IMR-90 (cell line): ENCODE measurements at regions of chr5 and their contacts with region 1.

Region 1: DNA sequence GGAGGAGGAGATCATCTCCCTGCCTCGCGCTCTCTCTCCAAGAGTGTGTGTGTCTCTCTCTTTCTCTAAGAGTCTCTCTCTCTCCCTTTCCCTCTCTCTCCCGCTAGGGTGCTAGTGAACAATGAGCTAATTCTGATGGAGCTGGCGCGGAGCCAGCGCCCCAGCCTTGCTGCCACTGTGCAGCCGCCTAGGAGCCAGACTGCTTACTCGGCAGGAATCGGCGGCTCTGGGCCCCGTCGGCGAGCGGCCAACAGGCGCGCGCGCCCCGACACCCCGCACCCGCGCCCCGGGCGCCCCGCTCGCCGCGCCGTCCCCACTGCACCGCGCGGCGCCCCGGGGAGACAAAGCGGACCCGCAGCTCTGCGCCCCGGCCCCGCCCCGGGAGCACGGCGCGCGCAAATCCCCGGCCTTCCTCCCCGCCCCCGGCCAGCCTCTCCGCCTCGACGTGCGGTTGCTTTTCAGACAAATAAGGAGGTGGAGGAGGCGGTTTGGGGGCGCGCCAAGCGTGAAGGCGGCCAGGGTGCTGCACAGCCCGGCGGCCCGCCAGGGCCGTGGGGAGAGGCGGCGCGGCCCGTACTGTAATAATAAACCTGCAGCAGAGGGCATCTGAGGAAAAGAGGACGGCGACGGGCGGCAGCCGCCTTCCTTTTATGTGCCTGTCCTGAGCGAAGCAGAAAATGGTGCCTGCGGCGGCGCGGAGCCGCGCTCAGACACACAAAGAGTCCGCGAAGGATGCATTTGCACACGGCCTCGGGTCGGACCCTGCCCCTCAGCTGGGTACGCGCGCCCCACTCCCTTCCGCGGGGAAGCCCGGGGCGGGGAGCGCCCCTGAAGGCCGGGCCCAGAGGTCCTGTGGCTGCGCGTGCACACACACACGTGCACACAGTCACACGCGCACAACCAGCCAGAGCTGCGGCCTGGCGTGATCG is 625 bp upstream of the NREP start:
- DNase-seq: peak; percentile 97
- ATAC-seq: peak; percentile 90
- H3K4me3 ChIP-seq: peak overlapping the region; percentile 95
- H3K27ac ChIP-seq: peak overlapping the region; percentile 93
- H3K4me1 ChIP-seq: peaks cover 4% of the 10 kb centered on the region
- H3K27me3 ChIP-seq: no peaks in the 10 kb centered on the region
- CTCF ChIP-seq: peak; percentile 59
- POLR2A ChIP-seq: peak; percentile 77
- RAD21 ChIP-seq: peak; percentile 57

Region 2: GRCh38 chr5:111158105-111158744 is 599.4 kb before region 1 on chr5:
- CTCF ChIA-PET with region 1: no interaction called
- POLR2A ChIA-PET with region 1: no interaction called
- dilution Hi-C with region 1: no loop called
- in situ Hi-C with region 1: no loop called
- intact Hi-C with region 1: loop called (anchors 1 kb)
- DNase-seq: peak; percentile 85
- ATAC-seq: peak; percentile 95
- H3K4me3 ChIP-seq: no peak overlapping the region
- H3K27ac ChIP-seq: no peak overlapping the region
- H3K4me1 ChIP-seq: no peaks in the 10 kb centered on the region
- H3K27me3 ChIP-seq: no peaks in the 10 kb centered on the region
- CTCF ChIP-seq: peak; percentile 99
- POLR2A ChIP-seq: 0 out of 2 replicates have a peak, but pooled peaks have one; percentile 28
- RAD21 ChIP-seq: peak; percentile 97

Region 3: GRCh38 chr5:111582993-111583601 is 174.5 kb before region 1 on chr5:
- CTCF ChIA-PET with region 1: no interaction called
- POLR2A ChIA-PET with region 1: no interaction called
- dilution Hi-C with region 1: no loop called
- in situ Hi-C with region 1: no loop called
- intact Hi-C with region 1: loop called (anchors 1 kb)
- DNase-seq: peak; percentile 89
- ATAC-seq: peak; percentile 91
- H3K4me3 ChIP-seq: no peak overlapping the region; the same call in 1 of the 2 replicates
- H3K27ac ChIP-seq: no peak overlapping the region
- H3K4me1 ChIP-seq: peaks cover 11% of the 10 kb centered on the region; the same call in 1 of the 2 replicates
- H3K27me3 ChIP-seq: no peaks in the 10 kb centered on the region
- CTCF ChIP-seq: no peak
- POLR2A ChIP-seq: no peak
- RAD21 ChIP-seq: no peak

Region 4: GRCh38 chr5:111954516-111955395 is 197.1 kb after region 1 on chr5:
- CTCF ChIA-PET with region 1: no interaction called
- POLR2A ChIA-PET with region 1: no interaction called
- dilution Hi-C with region 1: no loop called
- in situ Hi-C with region 1: no loop called
- intact Hi-C with region 1: loop called (anchors 2 kb)
- DNase-seq: peak; percentile 51
- ATAC-seq: peak; percentile 60
- H3K4me3 ChIP-seq: no peak overlapping the region
- H3K27ac ChIP-seq: peak overlapping the region; percentile 45; the same call in 1 of the 2 replicates
- H3K4me1 ChIP-seq: peaks cover 8% of the 10 kb centered on the region
- H3K27me3 ChIP-seq: no peaks in the 10 kb centered on the region
- CTCF ChIP-seq: no peak
- POLR2A ChIP-seq: no peak
- RAD21 ChIP-seq: no peak

Region 5: DNA sequence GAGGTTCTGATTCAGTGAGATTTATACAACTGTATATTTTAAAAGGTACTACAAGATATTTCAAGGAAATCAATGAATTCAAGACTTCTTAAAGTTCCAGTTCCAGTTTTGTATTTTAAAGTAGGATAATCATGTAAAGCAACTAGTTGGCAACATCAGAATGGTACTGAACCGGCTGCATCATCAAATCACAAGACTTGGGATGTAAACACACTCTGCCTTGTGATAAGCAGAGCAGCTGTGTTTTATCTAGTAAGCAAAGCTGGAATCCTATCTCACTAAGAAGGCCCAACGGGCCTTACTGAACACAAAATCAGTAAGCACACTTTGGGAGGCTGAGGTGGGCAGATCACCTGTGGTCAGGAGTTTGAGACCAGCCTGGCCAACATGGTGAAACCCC is 326.5 kb after region 1 on chr5:
- CTCF ChIA-PET with region 1: no interaction called
- POLR2A ChIA-PET with region 1: no interaction called
- dilution Hi-C with region 1: no loop called
- in situ Hi-C with region 1: no loop called
- intact Hi-C with region 1: loop called (anchors 5 kb)
- DNase-seq: peak; percentile 94
- ATAC-seq: peak; percentile 95
- H3K4me3 ChIP-seq: no peak overlapping the region
- H3K27ac ChIP-seq: peak overlapping the region; percentile 56; the same call in 1 of the 2 replicates
- H3K4me1 ChIP-seq: no peaks in the 10 kb centered on the region; the same call in 1 of the 2 replicates
- H3K27me3 ChIP-seq: no peaks in the 10 kb centered on the region
- CTCF ChIP-seq: no peak
- POLR2A ChIP-seq: no peak
- RAD21 ChIP-seq: no peak